Ovary (tissue), 10 donors: ENCODE measurements at regions of chrX and their contacts with region 1.

Region 1: GRCh38 chrX:146967306-146967705 is 152.8 kb upstream of the CXorf51A start:
- DNase-seq: no peak
- H3K4me3 ChIP-seq: no peak overlapping the region
- H3K27ac ChIP-seq: no peak overlapping the region
- H3K4me1 ChIP-seq: no peaks in the 10 kb centered on the region
- H3K27me3 ChIP-seq: no peaks in the 10 kb centered on the region
- CTCF ChIP-seq: no peak
- EP300 ChIP-seq: no peak
- POLR2A ChIP-seq: no peak

Region 2: DNA sequence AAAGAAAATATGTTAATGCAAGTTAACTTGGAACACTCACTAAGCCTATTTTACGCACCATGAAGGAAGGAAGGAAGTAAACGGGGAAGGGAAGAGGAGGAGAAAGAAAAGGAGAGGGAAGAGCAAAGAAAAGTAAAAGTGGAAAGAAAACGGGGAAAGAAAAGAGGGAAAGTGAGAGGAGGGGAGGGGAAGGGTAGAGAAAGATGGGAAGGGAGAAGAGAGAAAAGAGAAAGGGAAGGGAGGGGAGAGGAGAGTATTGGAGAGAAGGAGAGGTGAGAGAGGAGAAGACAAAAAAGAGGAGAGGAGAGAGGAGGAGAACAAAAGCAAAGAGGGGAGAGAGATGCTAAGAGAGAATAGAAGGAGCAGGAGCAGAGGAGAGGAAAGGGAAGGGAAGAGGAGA is 925.6 kb before region 1 on chrX:
- intact Hi-C with region 1: no loop called
- DNase-seq: no peak
- H3K4me3 ChIP-seq: no peak overlapping the region
- H3K27ac ChIP-seq: no peak overlapping the region
- H3K4me1 ChIP-seq: no peaks in the 10 kb centered on the region
- H3K27me3 ChIP-seq: no peaks in the 10 kb centered on the region
- CTCF ChIP-seq: no peak
- EP300 ChIP-seq: no peak
- POLR2A ChIP-seq: no peak

Region 3: DNA sequence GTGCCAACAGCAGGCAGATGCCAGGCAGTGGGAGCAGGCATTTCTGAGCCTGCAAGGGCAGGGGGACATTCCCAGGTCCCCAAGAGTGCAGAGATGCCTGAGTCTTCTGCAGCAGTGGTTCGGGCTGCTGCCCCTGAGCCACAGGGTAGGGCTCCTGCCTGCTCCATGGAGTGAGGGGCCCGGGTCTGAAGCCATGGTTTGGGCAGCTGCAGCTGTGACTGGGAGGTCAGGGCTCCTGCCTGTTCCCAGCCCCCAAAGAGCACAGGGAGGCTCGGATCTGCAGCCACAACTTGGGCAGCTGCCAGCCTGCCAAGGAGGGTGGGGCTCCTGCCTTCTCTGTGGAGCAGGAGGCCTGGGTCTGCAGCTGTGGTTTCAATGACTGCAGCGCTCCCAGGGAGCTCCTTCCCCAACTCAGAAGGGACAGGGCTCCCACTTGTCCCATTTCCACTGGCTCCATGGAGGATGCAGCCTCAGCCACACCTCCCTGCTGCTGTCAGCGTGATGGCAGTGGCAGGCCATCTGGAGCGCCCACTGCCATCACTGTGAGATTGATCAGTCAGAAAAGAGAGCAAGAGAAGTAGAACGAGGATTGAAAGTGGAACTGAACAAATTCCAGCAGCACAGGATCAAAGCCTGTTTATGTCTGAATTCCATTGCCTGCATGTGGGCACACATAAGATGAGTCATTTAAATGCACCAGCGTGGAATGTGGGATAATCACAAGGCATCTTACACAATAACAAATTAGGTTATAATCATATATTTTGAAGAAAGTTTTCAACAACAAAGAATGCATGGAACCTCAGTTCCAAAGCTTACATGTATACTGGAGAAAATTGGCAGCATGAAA is 59.7 kb before region 1 on chrX:
- intact Hi-C with region 1: no loop called
- DNase-seq: no peak
- H3K4me3 ChIP-seq: no peak overlapping the region
- H3K27ac ChIP-seq: no peak overlapping the region
- H3K4me1 ChIP-seq: no peaks in the 10 kb centered on the region
- H3K27me3 ChIP-seq: no peaks in the 10 kb centered on the region
- CTCF ChIP-seq: no peak
- EP300 ChIP-seq: no peak
- POLR2A ChIP-seq: no peak

Region 4: GRCh38 chrX:147077472-147077871 is 110.2 kb after region 1 on chrX:
- intact Hi-C with region 1: no loop called
- DNase-seq: no peak
- H3K4me3 ChIP-seq: no peak overlapping the region
- H3K27ac ChIP-seq: no peak overlapping the region
- H3K4me1 ChIP-seq: no peaks in the 10 kb centered on the region
- H3K27me3 ChIP-seq: no peaks in the 10 kb centered on the region
- CTCF ChIP-seq: no peak
- EP300 ChIP-seq: no peak
- POLR2A ChIP-seq: no peak

Region 5: DNA sequence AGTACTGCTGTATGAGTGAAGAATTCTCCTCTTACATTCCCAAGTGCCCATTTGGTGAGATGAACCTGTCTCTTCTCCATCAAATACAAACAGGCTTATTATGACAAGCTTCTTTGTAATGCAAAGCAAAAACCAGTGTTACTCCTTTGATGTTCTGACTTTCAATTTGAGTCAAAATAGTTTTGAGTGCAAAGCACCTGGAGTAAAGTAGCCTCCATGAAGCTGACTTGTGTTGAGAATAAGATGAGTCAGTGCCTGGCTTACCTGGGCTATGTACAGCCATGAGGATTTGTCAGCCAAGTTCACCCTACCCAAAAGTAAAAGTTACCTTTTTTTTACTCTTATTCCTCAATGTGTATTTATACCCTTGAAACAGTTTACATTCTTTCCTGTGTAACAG is 811.9 kb after region 1 on chrX:
- intact Hi-C with region 1: no loop called
- DNase-seq: no peak
- H3K4me3 ChIP-seq: no peak overlapping the region
- H3K27ac ChIP-seq: no peak overlapping the region
- H3K4me1 ChIP-seq: no peaks in the 10 kb centered on the region
- H3K27me3 ChIP-seq: no peaks in the 10 kb centered on the region
- CTCF ChIP-seq: no peak
- EP300 ChIP-seq: no peak
- POLR2A ChIP-seq: no peak

Region 6: DNA sequence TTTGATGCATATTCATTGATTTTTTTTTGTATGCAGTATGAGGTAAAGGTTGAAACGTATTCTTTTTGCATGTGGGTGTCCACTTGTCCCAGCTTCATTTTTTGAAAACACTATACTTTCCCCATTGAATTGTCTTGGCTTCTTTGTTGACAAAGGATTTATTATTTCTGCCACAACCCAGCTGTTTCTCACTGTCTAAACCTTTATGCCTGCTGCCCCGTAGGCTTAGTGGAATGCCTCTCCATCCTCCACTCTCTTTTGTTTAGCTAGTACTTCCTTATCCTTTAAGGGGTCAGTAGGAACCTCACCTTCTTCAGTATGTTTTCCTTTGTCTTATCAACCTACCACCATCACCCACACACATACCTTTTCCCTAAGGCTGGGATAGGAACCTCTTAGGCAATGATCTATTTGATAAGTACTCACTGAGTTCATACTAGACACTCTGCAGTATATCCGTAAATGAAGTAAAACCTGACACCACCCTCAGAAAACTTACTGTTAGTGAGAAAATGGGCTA is 952.9 kb after region 1 on chrX:
- intact Hi-C with region 1: loop called in 1 of 4 experiments (anchors 10 kb)
- DNase-seq: no peak
- H3K4me3 ChIP-seq: no peak overlapping the region
- H3K27ac ChIP-seq: no peak overlapping the region
- H3K4me1 ChIP-seq: peaks cover 3% of the 10 kb centered on the region
- H3K27me3 ChIP-seq: no peaks in the 10 kb centered on the region
- CTCF ChIP-seq: no peak
- EP300 ChIP-seq: no peak
- POLR2A ChIP-seq: no peak